Activated naive CD4-positive, alpha-beta T cell treated with anti-CD3 and anti-CD28 coated beads, Interleukin-2, amount 10 ng/mL, durations not matched to agents 7 days and 5 days (primary cell): ENCODE measurements at regions of chr20 and their contacts with region 1.

Region 1: DNA sequence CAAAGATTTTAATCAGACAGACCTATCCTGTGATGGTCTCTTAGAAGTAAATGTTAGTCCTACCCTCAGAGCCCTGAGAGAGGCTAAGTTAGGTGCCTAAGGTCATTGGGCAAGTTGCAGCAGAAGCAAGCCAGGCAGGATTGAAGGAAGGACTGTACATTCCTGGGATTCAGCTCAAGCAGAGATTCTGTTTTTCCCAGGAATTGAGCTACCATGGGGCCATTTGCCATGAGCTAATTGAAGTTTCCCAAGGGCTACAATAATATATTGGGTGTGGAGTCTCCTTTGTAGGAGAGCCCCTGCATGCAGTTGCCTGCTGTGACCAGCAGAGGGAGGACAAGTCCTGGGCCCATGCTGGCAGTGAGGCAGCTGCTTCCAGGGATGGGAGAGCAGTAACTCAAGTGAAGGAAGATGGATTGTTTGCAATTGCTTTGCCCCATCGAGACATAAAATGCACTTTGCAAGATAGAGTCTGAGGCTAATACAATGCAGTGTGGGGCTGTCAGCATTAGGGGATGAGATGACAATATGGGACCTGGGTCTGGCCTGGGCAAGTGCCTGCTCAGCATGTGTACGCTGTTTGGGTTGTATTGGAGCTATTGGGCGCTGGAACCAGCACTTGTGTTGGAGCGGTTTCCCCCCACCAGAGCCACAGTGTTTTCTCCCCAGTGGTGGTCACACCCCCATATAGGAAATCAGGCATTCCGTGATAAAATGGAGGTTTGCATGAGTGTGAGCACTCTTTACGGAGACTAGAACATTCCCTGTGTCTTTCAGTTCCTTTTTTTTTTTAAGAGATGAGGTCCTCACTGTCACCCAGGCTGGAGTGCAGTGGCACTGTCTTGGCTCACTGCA is 27.9 kb downstream of the DNMT3B start:
- DNase-seq: peak; percentile 80
- H3K4me3 Mint-ChIP-seq: no peak overlapping the region
- H3K27ac Mint-ChIP-seq: no peak overlapping the region
- H3K4me1 Mint-ChIP-seq: peaks cover 30% of the 10 kb centered on the region
- H3K27me3 Mint-ChIP-seq: no peaks in the 10 kb centered on the region

Region 2: GRCh38 chr20:31842471-31843157 is 947.5 kb before region 1 on chr20:
- CTCF ChIA-PET with region 1: no interaction called
- DNase-seq: no peak
- H3K4me3 Mint-ChIP-seq: no peak overlapping the region
- H3K27ac Mint-ChIP-seq: no peak overlapping the region
- H3K4me1 Mint-ChIP-seq: no peaks in the 10 kb centered on the region
- H3K27me3 Mint-ChIP-seq: peaks cover 17% of the 10 kb centered on the region

Region 3: DNA sequence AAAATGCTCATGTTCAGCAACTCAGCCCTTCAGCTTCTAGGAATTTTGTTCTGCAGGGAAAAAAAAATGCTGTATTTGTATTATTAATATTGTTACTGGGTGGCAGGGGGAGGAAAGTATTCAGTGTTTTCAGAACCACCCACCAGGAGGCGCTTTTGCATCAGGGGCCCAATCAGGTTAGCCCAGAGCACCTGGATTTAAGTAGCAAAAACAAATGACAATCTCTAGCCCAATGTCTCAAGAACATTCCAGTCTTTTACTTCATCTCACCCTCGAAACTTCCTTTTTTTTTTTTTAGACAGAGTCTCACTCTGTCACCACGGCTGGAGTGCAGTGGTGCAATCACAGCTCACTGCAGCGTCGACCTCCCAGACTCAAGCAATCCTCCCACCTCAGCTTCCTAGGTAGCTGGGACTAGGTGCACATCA is 115.7 kb before region 1 on chr20:
- CTCF ChIA-PET with region 1: interaction called, 13 read pairs
- DNase-seq: peak; percentile 84
- H3K4me3 Mint-ChIP-seq: no peak overlapping the region
- H3K27ac Mint-ChIP-seq: no peak overlapping the region
- H3K4me1 Mint-ChIP-seq: peaks cover 31% of the 10 kb centered on the region
- H3K27me3 Mint-ChIP-seq: peaks cover 11% of the 10 kb centered on the region

Region 4: DNA sequence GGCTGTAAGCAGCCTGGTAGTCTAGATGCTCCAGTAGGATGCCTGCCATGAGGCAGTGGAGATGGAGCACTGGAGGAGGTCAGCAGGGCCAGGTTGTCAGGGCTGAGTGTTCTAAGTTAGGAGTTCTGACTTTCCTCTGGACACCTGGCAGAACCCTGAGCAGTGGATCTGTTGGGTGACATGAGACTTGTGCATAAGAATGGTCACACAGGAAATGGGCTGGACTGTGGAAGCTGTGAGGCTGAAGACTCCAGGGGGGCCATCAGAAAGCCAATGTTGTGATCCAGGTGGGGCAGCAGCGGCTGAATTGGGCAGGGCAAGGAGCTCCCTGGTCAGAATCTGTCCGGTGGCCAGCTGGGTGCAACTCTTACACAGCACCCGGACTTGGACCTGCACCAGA is 92.5 kb before region 1 on chr20:
- CTCF ChIA-PET with region 1: no interaction called
- DNase-seq: no peak
- H3K4me3 Mint-ChIP-seq: no peak overlapping the region
- H3K27ac Mint-ChIP-seq: no peak overlapping the region
- H3K4me1 Mint-ChIP-seq: no peaks in the 10 kb centered on the region
- H3K27me3 Mint-ChIP-seq: no peaks in the 10 kb centered on the region

Region 5: DNA sequence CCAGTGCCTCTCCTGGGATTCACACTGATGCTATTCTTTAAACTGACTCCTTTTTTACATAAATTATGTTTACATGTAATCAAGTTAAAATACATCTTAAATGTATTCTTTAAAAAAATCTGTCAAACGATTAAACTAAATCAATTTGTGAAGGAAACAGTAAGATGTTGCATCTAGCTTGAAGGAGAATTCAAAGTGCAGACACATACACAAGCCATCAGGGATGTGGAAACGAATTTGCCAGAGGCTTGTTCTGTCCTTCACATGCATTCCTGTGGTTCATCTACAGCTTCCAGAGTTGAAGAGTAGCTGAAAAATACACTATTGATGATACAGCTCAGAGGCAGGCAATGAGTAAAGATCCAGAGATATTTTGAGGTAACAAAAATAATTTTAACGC is 256.3 kb after region 1 on chr20:
- CTCF ChIA-PET with region 1: no interaction called
- DNase-seq: no peak
- H3K4me3 Mint-ChIP-seq: no peak overlapping the region
- H3K27ac Mint-ChIP-seq: no peak overlapping the region
- H3K4me1 Mint-ChIP-seq: no peaks in the 10 kb centered on the region
- H3K27me3 Mint-ChIP-seq: no peaks in the 10 kb centered on the region

Region 6: DNA sequence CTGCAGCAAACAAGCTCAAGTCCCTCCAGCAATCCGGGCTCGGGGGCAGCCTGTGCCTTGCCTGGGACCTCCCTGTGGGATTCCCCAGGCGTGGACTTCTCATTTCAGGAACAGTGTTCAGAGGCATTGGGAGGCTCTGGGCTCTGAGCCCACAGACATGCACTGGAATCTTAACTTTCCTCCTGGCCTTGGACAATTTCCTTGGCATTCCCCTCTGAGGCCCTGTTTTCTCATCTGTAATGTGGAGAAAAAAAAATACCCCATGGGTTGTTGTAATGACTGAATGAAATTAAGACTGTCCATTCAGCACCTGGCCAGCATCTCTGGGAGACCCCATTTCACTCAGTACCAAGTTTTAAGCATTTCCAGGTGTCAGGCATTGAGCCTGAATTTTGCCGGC is 306.9 kb after region 1 on chr20:
- CTCF ChIA-PET with region 1: interaction called, 17 read pairs
- DNase-seq: no peak
- H3K4me3 Mint-ChIP-seq: no peak overlapping the region
- H3K27ac Mint-ChIP-seq: no peak overlapping the region
- H3K4me1 Mint-ChIP-seq: no peaks in the 10 kb centered on the region
- H3K27me3 Mint-ChIP-seq: peaks cover 7% of the 10 kb centered on the region